ENCODE measurements at regions of chr22 and their contacts with region 1.

Region 1: DNA sequence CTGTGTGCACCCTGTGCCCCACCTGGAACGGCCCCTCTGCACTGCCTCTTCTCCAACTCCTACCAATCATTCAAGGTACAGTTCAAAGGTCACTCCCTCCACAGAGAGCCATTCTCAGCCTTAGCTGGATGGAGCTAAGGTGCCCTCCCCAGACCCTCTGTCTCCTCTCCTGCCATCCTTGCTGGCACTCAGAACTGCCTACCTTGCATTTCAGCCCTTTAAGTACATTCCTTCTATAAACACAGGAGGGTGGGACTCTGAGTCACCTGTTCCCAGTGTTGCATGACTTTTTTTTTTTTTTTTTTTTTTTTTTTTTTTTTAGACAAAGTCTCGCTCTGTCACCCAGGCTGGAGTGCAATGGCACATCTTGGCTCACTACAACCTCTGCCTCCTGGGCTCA is 8.6 kb downstream of the TTLL1 start:
- DNase-seq: no peak
- H3K4me3 ChIP-seq: no peak overlapping the region
- H3K27ac ChIP-seq: no peak overlapping the region
- H3K4me1 ChIP-seq: no peaks in the 10 kb centered on the region
- H3K27me3 ChIP-seq: no peaks in the 10 kb centered on the region
- CTCF ChIP-seq: no peak
- POLR2A ChIP-seq: no peak

Region 2: DNA sequence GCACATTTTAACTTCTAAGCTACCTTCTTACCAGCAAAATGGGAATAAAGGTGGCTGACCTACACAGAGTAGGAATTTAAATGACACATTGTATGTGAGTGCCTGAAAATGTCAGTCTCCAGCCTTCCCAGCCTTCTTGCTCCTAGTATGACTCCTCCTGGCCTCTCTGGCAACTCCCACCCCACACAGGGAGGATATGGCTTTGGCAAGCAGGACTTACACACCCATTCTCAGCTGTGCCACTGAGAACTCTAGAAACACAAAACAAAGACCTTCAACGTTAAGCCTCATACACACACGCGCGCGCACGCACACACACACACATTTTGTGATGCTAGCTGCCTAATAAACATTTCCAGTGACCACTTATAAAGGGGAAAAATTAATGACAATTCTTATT is 131.5 kb before region 1 on chr22:
- intact Hi-C with region 1: no loop called
- DNase-seq: peak in 1 of 7 donors; percentile 52
- H3K4me3 ChIP-seq: no peak overlapping the region
- H3K27ac ChIP-seq: peak overlapping the region in 2 of 5 donors; percentile 22 to 54
- H3K4me1 ChIP-seq: peaks cover 13 to 55% of the 10 kb centered on the region in 2 donors
- H3K27me3 ChIP-seq: no peaks in the 10 kb centered on the region
- CTCF ChIP-seq: no peak
- POLR2A ChIP-seq: no peak

Region 3: DNA sequence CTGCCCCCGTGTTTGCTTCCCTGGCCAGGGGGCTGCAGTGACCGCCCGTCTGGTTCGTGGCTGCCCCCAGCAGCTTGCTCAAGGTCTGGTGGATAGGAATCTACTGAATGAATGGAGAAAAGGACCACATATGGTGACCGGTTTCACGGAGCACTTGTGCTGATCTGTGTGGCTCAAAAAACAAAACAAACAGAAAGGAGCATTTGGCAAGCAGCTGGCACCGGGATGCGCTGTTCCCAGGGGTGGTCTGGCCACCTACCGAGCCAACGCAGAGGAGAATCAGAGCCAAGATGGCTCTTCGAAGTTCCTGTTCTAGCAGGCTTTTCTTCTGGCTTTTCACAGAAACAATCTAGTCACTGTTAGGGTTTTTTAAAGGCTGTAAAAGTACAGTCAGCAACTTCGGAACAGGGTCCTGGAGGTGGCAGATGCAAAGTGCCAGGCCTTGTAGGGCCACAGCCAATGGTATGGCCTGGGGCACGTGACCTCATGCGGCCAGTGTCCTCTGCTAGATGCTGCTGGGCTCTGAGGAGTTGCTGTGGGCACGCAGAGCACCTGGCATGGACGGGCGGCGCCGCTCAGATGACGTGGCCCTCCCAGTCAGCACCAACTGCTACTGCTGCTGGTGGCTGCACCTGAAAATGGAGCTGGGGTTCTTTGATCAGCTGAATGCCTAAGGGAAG is 38.4 kb before region 1 on chr22:
- intact Hi-C with region 1: loop called in 1 of 2 experiments (anchors 5 kb)
- DNase-seq: no peak
- H3K4me3 ChIP-seq: no peak overlapping the region
- H3K27ac ChIP-seq: no peak overlapping the region
- H3K4me1 ChIP-seq: no peaks in the 10 kb centered on the region
- H3K27me3 ChIP-seq: no peaks in the 10 kb centered on the region
- CTCF ChIP-seq: no peak
- POLR2A ChIP-seq: no peak

Region 4: GRCh38 chr22:43375951-43376455 is 295.4 kb after region 1 on chr22:
- intact Hi-C with region 1: no loop called
- DNase-seq: no peak
- H3K4me3 ChIP-seq: no peak overlapping the region
- H3K27ac ChIP-seq: no peak overlapping the region
- H3K4me1 ChIP-seq: peaks cover 10% of the 10 kb centered on the region in 2 donors
- H3K27me3 ChIP-seq: peaks cover 3% of the 10 kb centered on the region
- CTCF ChIP-seq: no peak
- POLR2A ChIP-seq: no peak

Region 5: GRCh38 chr22:43385770-43386641 is 305.4 kb after region 1 on chr22:
- intact Hi-C with region 1: no loop called
- DNase-seq: peak; percentile 77 to 86 (median 80)
- H3K4me3 ChIP-seq: no peak overlapping the region
- H3K27ac ChIP-seq: no peak overlapping the region
- H3K4me1 ChIP-seq: no peaks in the 10 kb centered on the region
- H3K27me3 ChIP-seq: no peaks in the 10 kb centered on the region
- CTCF ChIP-seq: peak; percentile 86 to 91 (median 88)
- POLR2A ChIP-seq: no peak